ENCODE measurements at regions of chr7 and their contacts with region 1.

Region 1: DNA sequence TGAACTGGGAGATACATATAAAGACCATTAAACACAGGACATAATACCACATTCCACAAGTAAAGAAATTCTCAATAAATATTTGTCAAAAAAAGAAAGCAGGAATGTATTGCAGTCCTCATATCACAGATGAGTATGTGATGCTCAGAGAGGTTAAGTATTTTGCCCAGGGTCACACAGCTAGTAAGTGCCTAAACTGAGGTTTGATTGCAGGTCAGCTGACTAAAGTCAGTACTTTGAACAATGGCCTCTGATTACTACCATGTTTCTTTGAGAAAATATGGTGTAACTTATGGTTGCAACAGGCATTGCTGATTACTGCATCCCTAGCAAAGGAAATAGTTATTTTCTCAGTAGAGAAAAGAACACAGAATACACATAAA is 267.1 kb downstream of the ELMO1 start:
- DNase-seq: no peak
- H3K4me3 Mint-ChIP-seq: no peak overlapping the region
- H3K27ac Mint-ChIP-seq: no peak overlapping the region
- H3K4me1 Mint-ChIP-seq: peaks cover 2% of the 10 kb centered on the region
- H3K27me3 Mint-ChIP-seq: no peaks in the 10 kb centered on the region

Region 2: GRCh38 chr7:36487756-36488336 is 693.7 kb before region 1 on chr7:
- CTCF ChIA-PET with region 1: interaction called, 51 read pairs
- DNase-seq: peak; percentile 58
- H3K4me3 Mint-ChIP-seq: no peak overlapping the region
- H3K27ac Mint-ChIP-seq: no peak overlapping the region
- H3K4me1 Mint-ChIP-seq: no peaks in the 10 kb centered on the region
- H3K27me3 Mint-ChIP-seq: peaks cover 6% of the 10 kb centered on the region

Region 3: DNA sequence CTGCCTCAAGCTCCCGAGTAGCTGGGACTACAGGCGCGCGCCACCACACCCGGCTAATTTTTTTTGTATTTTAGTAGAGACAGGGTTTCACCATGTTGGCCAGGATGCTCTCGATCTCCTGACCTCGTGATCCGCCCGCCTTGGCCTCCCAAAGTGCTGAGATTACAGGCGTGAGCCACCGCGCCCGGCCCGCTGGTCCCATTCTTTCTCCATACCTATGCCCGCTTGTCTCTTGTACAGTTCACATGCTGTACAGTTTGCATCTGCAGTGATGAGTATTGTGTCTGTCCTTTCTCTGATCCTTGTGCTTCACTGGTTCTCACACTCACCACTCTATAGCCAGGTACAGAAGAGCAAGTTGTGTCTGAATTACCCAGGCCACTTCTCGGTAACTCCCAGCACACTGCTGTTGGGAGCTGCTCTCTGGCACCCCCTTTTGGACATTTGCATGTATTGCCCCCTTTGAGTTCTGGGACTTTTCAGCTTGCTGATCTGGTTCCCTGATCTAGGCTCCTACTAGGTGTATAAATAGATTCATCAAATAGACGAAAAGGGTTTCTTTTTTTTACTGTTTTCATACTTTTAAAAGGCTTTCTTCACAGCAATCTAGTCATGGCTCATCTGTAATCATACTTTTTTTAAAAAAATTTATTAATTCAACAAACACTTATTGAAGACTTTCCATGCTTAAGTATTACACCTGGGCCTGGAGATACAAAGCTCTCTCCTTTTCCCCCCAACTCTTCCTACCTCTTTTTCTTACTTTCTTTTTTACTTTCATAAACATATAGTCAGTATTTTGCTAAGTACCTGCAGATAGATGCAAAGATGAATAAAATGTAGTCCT is 510.7 kb before region 1 on chr7:
- CTCF ChIA-PET with region 1: interaction called, 26 read pairs
- DNase-seq: peak; percentile 77
- H3K4me3 Mint-ChIP-seq: no peak overlapping the region
- H3K27ac Mint-ChIP-seq: no peak overlapping the region
- H3K4me1 Mint-ChIP-seq: peaks cover 18% of the 10 kb centered on the region
- H3K27me3 Mint-ChIP-seq: peaks cover 4% of the 10 kb centered on the region

Region 4: DNA sequence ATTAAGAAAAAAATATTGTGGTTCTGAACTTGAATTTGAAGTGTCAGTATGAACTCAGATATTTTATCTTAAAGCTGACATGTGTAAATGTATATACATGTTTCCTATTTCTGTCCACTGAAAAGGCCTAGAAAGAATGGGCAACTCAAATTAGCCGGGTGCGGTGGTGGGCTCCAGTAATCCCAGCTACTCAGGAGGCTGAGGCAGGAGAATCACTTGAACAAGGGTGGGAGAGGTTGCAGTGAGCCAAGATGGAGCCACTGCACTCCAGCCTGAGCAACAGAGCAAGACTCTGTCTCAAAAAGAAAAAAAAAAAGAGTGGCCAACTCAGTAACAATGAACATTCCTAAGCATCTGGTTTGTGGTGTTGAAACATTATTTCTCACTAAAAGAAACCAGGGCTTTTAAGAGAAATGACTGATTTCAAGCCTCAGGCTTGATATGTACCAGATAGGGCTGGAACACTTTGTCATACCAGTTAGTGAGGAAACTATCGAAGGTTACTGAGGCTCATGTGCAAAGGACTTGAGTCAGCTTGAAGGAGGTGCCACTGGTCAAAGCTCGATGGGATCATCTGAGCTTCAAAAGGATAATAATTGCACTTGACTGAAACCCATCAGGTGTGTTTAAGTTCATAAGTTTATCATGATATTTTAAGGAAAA is 497.7 kb before region 1 on chr7:
- CTCF ChIA-PET with region 1: interaction called, 44 read pairs
- DNase-seq: no peak
- H3K4me3 Mint-ChIP-seq: no peak overlapping the region
- H3K27ac Mint-ChIP-seq: no peak overlapping the region
- H3K4me1 Mint-ChIP-seq: peaks cover 18% of the 10 kb centered on the region
- H3K27me3 Mint-ChIP-seq: no peaks in the 10 kb centered on the region

Region 5: DNA sequence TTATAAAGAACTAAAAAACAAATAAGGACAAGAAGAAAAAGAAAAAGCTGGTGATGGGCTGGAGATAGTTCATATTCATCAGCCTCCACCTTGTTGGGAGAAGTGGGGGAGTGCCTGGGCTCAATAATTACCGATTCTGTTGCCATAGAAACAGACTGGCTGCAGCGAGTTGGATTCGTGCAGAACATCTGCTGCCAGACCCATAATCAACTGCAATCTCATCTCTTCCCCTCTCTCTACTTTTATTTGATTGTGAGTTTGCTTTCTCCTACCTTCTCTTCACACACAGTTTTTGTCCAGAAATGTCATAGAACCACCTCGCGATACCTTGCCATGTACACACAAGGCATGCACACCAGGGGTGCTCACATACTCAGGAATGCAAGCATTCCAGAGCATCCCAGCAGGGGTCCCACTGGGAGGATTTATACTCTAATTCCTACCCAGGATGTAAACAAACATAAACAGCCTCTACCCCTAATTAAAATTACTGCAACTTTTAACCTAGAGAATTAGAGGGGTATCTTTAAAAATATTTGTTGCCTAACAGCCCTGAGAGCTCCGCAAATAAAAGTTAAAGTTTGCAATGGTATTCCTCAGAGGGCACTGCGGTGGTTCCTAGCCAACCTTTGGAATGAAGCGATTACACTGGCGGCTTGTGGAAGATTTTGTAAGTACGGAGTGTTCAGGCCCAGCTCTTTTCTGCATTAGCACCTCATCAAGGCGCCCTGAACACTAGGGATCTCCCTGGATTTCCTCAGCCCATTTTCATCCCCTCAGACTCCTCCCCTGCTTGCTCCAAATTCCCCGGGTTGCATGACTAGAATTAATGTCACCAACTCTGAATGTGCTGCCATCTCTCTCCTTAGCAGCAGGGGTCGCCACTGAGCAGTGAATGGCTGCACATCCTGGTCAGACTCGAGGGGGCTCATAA is 194.8 kb before region 1 on chr7:
- CTCF ChIA-PET with region 1: interaction called, 43 read pairs
- DNase-seq: peak; percentile 67
- H3K4me3 Mint-ChIP-seq: no peak overlapping the region
- H3K27ac Mint-ChIP-seq: no peak overlapping the region
- H3K4me1 Mint-ChIP-seq: peaks cover 7% of the 10 kb centered on the region
- H3K27me3 Mint-ChIP-seq: no peaks in the 10 kb centered on the region

Region 6: DNA sequence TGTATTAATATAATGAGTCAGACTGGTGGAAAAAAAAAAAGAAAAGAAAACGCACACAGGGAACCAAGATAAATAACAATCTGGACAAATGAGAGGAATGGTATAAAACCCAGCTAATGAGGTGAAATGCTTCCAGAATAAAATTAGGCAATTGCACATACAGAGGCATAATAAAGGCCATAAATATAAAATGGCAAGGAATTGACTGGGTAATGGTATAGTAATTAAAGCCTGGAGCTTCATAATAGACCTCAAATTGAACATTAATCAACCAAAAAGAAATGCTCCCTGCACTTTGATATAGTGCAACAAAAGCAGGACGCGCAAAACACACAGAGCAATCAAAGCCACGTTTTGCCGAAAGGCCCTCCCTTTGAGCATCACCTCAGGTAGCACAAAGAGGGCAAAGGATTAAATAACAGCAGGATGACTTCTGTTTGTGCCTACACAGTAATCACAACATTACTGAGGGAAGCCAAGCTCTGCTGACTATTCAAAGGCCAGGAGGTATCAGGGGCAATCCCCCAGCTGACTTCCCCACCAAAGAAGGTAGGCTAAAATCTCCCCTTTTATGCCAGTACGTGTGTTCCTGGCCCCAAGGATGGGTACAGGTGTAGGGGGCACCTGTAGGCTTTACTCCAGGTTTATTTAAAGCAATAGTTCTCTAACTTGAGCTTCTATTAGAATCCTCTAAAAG is 76.6 kb before region 1 on chr7:
- CTCF ChIA-PET with region 1: no interaction called
- DNase-seq: no peak
- H3K4me3 Mint-ChIP-seq: no peak overlapping the region
- H3K27ac Mint-ChIP-seq: no peak overlapping the region
- H3K4me1 Mint-ChIP-seq: peaks cover 15% of the 10 kb centered on the region
- H3K27me3 Mint-ChIP-seq: no peaks in the 10 kb centered on the region

Region 7: DNA sequence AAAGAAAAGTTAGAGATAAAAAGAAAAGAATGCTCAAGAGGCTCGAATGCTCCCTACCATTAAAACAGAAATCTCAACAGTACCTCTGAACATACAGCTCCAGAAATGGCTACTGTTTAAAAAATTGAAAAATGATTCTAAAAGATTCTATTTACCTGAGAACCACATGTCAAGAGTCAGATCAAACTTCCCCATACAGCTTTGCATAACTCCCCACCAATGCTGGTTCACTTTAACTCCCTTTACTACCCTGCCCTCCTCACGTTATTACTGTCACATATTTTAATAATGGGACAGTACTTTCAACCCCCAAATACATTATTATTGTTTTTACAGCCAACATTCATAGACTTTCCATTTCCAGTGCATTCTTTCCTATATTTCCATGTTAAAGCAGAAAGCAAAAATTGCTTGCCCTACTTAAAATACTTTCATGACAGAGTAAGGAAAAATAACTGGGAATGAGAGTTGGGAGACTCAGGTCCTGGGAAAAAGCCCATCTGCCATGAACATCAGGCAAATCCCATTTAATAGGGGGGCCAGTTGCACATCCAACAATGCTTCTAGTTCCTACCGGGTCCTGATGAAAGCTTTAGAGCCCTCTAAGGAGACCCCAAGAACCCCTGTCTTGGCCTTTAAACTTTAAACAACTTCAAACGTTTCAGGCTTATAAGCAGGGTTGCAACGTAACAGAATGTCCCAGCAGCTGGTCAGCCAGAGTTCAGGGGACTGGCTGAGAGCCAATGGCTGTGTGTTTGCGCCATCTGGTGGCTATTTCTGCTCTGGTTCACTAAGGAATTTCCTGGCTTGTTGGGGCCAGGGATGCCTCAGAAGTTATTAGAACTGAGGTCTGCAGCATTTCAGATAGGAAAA is 19.7 kb after region 1 on chr7:
- CTCF ChIA-PET with region 1: interaction called, 18 read pairs
- DNase-seq: peak; percentile 61
- H3K4me3 Mint-ChIP-seq: no peak overlapping the region
- H3K27ac Mint-ChIP-seq: no peak overlapping the region
- H3K4me1 Mint-ChIP-seq: peaks cover 10% of the 10 kb centered on the region
- H3K27me3 Mint-ChIP-seq: no peaks in the 10 kb centered on the region

Region 8: GRCh38 chr7:37336259-37336658 is 154.7 kb after region 1 on chr7:
- CTCF ChIA-PET with region 1: no interaction called
- DNase-seq: peak; percentile 46
- H3K4me3 Mint-ChIP-seq: peak overlapping the region; percentile 2
- H3K27ac Mint-ChIP-seq: peak overlapping the region; percentile 87
- H3K4me1 Mint-ChIP-seq: peaks cover 78% of the 10 kb centered on the region
- H3K27me3 Mint-ChIP-seq: no peaks in the 10 kb centered on the region

Measured in activated naive CD4-positive, alpha-beta T cell treated with anti-CD3 and anti-CD28 coated beads, Interleukin-2, amount 10 ng/mL, durations not matched to agents 7 days and 5 days (primary cell).